Heart right ventricle (tissue), 16 donors: ENCODE measurements at regions of chr16 and their contacts with region 1.

Region 1: DNA sequence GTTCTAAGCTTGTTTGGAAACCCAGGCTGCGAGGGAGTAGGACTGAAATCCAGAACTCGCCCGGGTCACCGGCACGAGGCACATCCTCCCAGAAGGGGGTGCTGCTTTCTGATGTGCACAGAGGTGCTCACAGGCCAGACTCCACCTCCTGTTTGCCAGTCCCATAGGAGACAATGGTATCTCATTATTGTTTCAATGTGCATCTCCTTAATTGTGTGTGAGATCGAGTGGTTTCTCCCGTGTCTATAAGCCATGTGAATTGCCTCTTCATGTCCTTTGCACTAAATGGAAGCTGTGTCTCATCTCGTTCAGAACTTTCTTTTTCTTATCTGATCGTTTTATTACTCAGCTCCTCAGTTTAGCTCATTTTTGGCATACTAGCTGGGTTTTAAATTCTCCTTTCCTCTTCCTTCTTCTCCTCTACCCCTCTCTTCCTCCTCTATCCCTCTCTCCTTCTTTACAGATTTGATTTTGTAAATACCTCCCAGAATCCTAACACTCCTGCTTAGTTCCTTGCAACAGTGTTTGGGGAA is 32.1 kb upstream of the PRKCB start:
- DNase-seq: peak; percentile 23 to 27
- ATAC-seq: peak in 3 of 8 donors; percentile 27 to 59 (median 38)
- H3K4me3 ChIP-seq: no peak overlapping the region
- H3K27ac ChIP-seq: no peak overlapping the region
- H3K4me1 ChIP-seq: peaks cover 0 to 7% (median 0%) of the 10 kb centered on the region in 9 donors
- H3K27me3 ChIP-seq: peaks cover 0 to 74% (median 21%) of the 10 kb centered on the region in 7 donors
- CTCF ChIP-seq: peak in 5 of 9 donors; percentile 16 to 76 (median 41)

Region 2: GRCh38 chr16:23999663-24000062 is 196.0 kb after region 1 on chr16:
- intact Hi-C with region 1: loop called in 1 of 10 experiments (anchors 10 kb)
- DNase-seq: no peak
- ATAC-seq: no peak
- H3K4me3 ChIP-seq: no peak overlapping the region
- H3K27ac ChIP-seq: no peak overlapping the region
- H3K4me1 ChIP-seq: no peaks in the 10 kb centered on the region
- H3K27me3 ChIP-seq: peaks cover 0 to 14% (median 3%) of the 10 kb centered on the region in 7 donors
- CTCF ChIP-seq: no peak

Region 3: DNA sequence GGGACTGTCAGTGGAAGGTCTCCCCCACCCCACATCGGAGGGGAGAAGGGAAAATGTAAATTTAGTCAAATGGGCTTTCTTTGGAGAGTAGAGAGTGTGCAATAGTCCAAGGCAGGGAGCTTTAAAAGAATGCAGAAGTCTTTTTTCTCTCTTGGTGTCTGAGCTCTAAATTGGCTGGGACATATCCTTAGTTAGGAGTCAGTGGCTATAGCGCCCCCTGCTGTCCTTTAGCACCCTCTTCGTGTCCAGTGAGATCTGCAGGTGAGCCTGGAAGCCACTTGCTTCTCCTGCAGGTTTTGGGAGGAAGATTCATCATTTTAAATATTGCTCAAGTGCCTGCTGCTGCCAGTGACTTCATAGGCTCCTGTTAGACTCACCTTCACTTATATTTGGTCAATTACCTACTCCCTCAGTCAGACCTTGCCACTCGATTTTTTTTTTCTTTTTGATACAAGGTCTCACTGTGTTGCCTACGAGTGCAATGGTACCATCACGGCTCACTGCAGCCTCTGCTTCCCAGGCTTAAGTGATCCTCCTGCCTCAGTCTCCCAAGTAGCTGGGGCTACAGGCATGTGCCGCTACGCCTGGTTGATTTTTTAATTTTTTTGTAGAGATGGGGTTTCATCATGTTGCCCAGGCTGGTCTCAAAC is 206.9 kb after region 1 on chr16:
- intact Hi-C with region 1: loop called (anchors 2 to 10 kb)
- DNase-seq: peak; percentile 58 to 67
- ATAC-seq: peak in 6 of 8 donors; percentile 55 to 71 (median 62)
- H3K4me3 ChIP-seq: no peak overlapping the region
- H3K27ac ChIP-seq: no peak overlapping the region
- H3K4me1 ChIP-seq: peaks cover 0 to 34% (median 0%) of the 10 kb centered on the region in 9 donors
- H3K27me3 ChIP-seq: peaks cover 0 to 36% (median 5%) of the 10 kb centered on the region in 7 donors
- CTCF ChIP-seq: peak; percentile 19 to 84 (median 68)

Region 4: GRCh38 chr16:24499193-24499814 is 695.6 kb after region 1 on chr16:
- intact Hi-C with region 1: loop called in 8 of 10 experiments (anchors 5 to 10 kb)
- DNase-seq: no peak
- ATAC-seq: peak in 2 of 8 donors; percentile 30 to 35
- H3K4me3 ChIP-seq: no peak overlapping the region
- H3K27ac ChIP-seq: no peak overlapping the region
- H3K4me1 ChIP-seq: no peaks in the 10 kb centered on the region
- H3K27me3 ChIP-seq: peaks cover 0 to 37% (median 24%) of the 10 kb centered on the region in 7 donors
- CTCF ChIP-seq: peak in 6 of 9 donors; percentile 30 to 46 (median 41)

Region 5: GRCh38 chr16:24504472-24505345 is 701.1 kb after region 1 on chr16:
- intact Hi-C with region 1: loop called in 8 of 10 experiments (anchors 5 to 10 kb)
- DNase-seq: peak; percentile 15 to 48
- ATAC-seq: peak; percentile 55 to 88 (median 71)
- H3K4me3 ChIP-seq: no peak overlapping the region
- H3K27ac ChIP-seq: no peak overlapping the region
- H3K4me1 ChIP-seq: no peaks in the 10 kb centered on the region
- H3K27me3 ChIP-seq: peaks cover 0 to 47% (median 37%) of the 10 kb centered on the region in 7 donors
- CTCF ChIP-seq: peak; percentile 62 to 82 (median 76)